Activated B cell treated with CpG ODN at 0.5 μM for 24 hours (primary cell): ENCODE measurements at regions of chr3 and their contacts with region 1.

Region 1: DNA sequence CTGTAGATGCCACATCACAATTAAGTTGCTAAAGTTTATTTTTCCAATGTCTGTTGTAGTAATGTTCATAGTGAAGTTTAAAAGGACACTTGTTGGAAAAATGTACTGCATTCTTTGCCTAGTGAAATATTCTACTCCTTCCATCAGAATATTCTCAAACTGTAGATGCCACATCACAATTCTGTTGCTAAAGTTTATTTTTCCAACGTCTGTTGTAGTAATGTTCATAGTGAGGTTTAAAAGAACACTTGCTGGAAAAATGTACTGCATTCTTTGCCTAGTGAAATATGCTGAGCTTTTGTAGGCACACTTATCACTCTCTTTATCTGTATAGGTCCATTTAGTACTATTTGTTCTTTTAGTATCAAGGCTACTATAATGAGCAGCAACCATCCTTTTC is 836.1 kb downstream of the NAALADL2 start:
- DNase-seq: no peak
- ATAC-seq: no peak
- H3K4me3 Mint-ChIP-seq: no peak overlapping the region
- H3K27ac Mint-ChIP-seq: no peak overlapping the region
- H3K4me1 Mint-ChIP-seq: no peaks in the 10 kb centered on the region
- H3K27me3 Mint-ChIP-seq: no peaks in the 10 kb centered on the region
- CTCF ChIP-seq: no peak

Region 2: DNA sequence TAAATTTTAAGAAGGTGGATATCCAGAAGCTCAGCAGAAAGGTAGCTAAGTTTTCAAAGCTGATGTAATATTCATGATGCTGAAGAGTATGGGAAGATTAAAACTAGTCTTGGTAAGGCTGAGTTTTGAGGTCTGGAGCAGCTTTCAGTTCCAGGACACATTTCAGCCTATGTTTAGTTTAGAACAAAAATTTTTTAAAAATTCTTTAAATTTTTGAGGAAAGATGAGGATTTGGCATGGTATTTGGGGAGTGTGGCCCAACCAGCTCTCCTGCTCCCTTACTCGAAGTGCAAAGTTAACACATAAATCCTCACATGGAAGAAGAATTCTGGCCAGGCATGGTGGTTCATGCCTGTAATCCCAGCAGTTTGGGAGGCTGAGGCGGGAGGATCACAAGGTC is 202.9 kb after region 1 on chr3:
- CTCF ChIA-PET with region 1: no interaction called
- POLR2A ChIA-PET with region 1: no interaction called
- intact Hi-C with region 1: no loop called
- DNase-seq: no peak
- ATAC-seq: no peak
- H3K4me3 Mint-ChIP-seq: no peak overlapping the region
- H3K27ac Mint-ChIP-seq: no peak overlapping the region
- H3K4me1 Mint-ChIP-seq: no peaks in the 10 kb centered on the region
- H3K27me3 Mint-ChIP-seq: no peaks in the 10 kb centered on the region
- CTCF ChIP-seq: no peak

Region 3: GRCh38 chr3:176904506-176904905 is 1209.3 kb after region 1 on chr3:
- CTCF ChIA-PET with region 1: no interaction called
- POLR2A ChIA-PET with region 1: no interaction called
- intact Hi-C with region 1: loop called (anchors 5 kb)
- DNase-seq: no peak
- ATAC-seq: no peak
- H3K4me3 Mint-ChIP-seq: no peak overlapping the region
- H3K27ac Mint-ChIP-seq: no peak overlapping the region
- H3K4me1 Mint-ChIP-seq: no peaks in the 10 kb centered on the region
- H3K27me3 Mint-ChIP-seq: peaks cover 8% of the 10 kb centered on the region
- CTCF ChIP-seq: no peak